GM10248 (cell line): ENCODE measurements at regions of chr15 and their contacts with region 1.

Region 1: GRCh38 chr15:76235186-76235826 is 76.0 kb downstream of the ETFA start:
- DNase-seq: peak; percentile 26
- CTCF ChIP-seq: peak; percentile 34

Region 2: DNA sequence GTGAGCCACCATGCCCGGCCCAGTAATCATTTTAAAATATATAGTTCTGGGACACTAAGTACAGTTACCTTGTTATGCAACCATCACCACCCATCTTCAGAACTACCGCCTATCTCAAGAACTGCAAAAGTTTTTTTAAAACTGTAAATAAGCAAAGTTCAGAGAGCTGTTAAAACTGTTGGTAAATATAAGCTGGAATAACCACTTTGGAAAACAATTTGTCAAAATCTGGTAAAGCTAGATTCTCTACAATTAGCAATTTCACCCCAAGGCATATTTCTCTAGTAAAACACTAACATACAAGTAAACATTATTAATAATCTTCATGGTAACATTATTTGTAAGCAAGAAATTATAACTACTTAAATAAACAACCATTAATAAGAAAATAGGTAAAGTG is 14.4 kb after region 1 on chr15:
- CTCF ChIA-PET with region 1: interaction called, 10 read pairs
- POLR2A ChIA-PET with region 1: no interaction called
- DNase-seq: no peak
- CTCF ChIP-seq: no peak